Endothelial cell of umbilical vein (primary cell): ENCODE measurements at regions of chr4 and their contacts with region 1.

Region 1: DNA sequence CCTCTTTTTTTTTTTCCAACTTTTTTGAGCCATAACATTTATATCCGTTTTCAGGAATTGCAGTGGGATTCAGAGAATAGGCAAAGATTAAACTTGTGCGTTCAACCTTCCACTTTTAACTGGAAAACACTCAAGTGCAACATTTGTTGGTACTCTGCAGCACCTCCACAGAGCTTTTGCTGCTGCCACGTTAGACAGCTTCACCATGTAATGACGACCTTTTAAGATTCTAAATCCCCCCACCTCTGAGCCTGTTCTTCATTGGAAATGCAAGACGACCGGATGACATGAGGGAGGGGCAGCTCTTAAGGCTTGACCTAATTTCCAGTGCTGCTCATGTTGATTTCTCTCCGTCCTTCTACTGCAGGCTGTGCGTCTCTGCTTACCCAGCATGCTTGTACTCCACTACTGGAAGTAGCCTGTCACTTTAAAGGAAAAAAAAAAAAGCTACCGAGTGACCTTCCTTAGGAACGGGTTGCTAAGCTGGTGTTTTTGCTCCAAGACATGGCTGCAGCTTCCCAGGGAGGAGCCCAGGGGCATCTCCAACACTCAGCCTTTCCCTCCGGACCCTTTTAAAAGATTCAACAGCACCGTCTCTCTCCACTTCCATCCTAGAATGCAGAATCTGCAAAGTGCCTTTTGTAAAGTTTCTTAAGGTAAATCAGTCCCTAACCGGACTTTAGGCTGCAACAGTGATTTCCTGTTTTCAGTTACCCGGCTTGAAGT is at the start of gene CC2D2A:
- DNase-seq: peak; percentile 67
- H3K4me3 ChIP-seq: peak within 1 kb of the TSS; percentile 44 to 83 (median 51)
- H3K27ac ChIP-seq: no peak within 1 kb of the TSS
- H3K4me1 ChIP-seq: peaks cover 3% of the 10 kb centered on the region
- H3K27me3 ChIP-seq: peaks cover 2 to 10% of the 10 kb centered on the region in 2 experiments
- CTCF ChIP-seq: no peak
- POLR2A ChIP-seq: no peak
- total RNA-seq, gene CC2D2A: 13.2 and 22.4 TPM in 2 replicates

Region 2: DNA sequence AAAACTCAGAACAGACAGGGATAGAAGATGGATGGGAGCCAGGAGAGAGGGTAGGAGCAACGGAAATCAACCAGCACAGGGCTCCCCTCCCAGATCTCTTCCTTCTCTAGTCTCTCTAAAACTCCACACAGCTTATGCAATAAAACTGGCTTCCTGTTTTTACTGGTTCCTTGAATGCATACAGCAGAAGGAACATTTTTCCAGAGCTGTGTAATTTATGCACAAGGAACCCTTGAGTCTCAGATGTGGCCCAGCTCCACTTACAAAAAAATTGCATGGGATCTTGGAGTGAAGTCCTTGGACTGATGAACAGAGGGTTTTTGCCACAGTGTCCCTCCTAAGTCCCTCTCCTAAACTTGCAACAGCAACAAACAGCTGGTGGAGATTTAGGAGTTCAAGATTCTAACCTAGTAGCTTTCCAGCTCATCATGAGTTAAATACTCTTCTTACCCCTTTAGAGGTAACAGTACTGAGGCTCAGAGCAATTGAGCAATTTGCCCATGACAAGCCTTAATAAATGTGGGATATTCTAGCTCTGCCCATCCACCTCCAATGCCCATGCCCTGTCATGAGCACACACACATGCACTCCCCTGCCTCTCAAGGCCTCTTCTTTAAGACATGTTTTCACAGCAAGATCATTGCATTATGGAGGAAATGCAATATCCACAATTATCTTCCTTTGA is 18.2 kb before region 1 on chr4:
- CTCF ChIA-PET with region 1: interaction called, 26 read pairs
- POLR2A ChIA-PET with region 1: no interaction called
- dilution Hi-C with region 1: no loop called
- intact Hi-C with region 1: loop called (anchors 1 kb)
- DNase-seq: peak; percentile 11
- H3K4me3 ChIP-seq: no peak overlapping the region
- H3K27ac ChIP-seq: no peak overlapping the region
- H3K4me1 ChIP-seq: peaks cover 4% of the 10 kb centered on the region
- H3K27me3 ChIP-seq: peaks cover 0 to 2% of the 10 kb centered on the region in 2 experiments
- CTCF ChIP-seq: no peak
- POLR2A ChIP-seq: no peak